Heart right ventricle (tissue), 16 donors: ENCODE measurements at regions of chrX and their contacts with region 1.

Region 1: DNA sequence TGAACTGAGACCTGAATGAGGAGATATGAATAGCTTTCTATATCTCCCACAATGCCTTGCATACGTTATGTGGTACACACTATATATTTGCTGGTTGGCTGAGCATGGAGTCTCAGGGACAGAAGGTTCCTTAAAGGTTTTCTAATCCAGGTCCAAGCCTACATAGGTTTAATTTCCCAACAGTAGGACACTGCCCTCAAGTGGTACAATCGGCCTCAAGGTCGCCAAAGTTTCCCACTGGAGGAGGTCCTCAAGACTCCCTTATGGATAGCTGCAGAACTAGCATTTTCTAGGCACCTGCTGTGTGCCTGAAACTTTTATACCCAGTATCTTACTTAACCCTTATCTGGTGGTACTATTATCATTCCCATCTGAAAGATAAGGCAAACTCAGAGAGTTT is 21.0 kb upstream of the EFNB1 start:
- DNase-seq: no peak
- ATAC-seq: peak; percentile 35 to 81 (median 64)
- H3K4me3 ChIP-seq: no peak overlapping the region
- H3K27ac ChIP-seq: no peak overlapping the region
- H3K4me1 ChIP-seq: peaks cover 0 to 3% (median 0%) of the 10 kb centered on the region in 9 donors
- H3K27me3 ChIP-seq: peaks cover 0 to 49% (median 0%) of the 10 kb centered on the region in 7 donors
- CTCF ChIP-seq: peak; percentile 27 to 64 (median 51)

Region 2: DNA sequence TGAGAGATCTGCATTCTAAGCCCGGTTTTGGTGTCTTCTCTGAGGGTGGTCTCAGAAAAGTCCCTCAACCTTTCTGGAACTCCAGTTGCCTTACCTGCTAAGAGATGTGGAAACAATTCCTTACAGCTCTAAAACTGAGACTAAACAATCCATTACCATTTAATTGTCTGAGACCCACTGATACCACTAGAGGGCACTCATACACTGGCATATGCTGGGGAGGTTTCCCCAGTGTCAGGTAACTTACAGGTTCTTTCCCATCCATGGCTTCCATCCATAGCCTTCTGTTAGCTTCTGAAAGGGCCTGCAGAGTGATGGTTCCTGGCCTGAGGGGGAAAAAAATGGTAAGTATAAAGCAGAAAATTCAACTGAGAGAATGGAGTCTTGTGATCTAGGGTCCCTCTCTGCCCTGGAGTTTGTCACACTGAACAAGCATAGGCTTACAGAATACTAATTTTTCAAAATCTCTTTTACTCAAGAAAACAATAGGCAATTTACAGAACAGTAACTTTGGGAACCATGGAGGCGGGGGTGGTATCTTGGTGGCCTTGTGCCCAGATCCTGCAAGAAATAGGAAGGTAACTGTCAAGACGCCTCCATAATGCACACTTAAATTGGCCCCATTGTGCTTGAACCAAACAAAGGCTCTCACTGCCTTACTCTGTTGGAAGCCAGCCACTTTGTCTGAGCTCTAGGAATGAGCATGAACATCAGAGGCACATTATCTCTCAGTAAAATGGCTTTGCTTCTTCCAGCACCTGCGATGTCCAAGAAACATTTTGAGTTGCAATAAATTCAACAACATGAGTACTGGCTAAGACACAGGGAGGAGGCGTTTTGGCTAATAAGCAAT is 610.7 kb before region 1 on chrX:
- intact Hi-C with region 1: loop called in 1 of 10 experiments (anchors 10 kb)
- DNase-seq: peak in 1 of 2 donors; percentile 19
- ATAC-seq: peak in 3 of 8 donors; percentile 44 to 60 (median 44)
- H3K4me3 ChIP-seq: no peak overlapping the region
- H3K27ac ChIP-seq: no peak overlapping the region
- H3K4me1 ChIP-seq: peaks cover 0 to 12% (median 0%) of the 10 kb centered on the region in 9 donors
- H3K27me3 ChIP-seq: peaks cover 0 to 10% (median 0%) of the 10 kb centered on the region in 7 donors
- CTCF ChIP-seq: peak; percentile 42 to 77 (median 64)

Region 3: GRCh38 chrX:68511255-68511654 is 296.6 kb before region 1 on chrX:
- intact Hi-C with region 1: loop called in 9 of 10 experiments (anchors 1 to 10 kb)
- DNase-seq: peak in 1 of 2 donors; percentile 26
- ATAC-seq: peak in 2 of 8 donors; percentile 50 to 58
- H3K4me3 ChIP-seq: no peak overlapping the region
- H3K27ac ChIP-seq: no peak overlapping the region
- H3K4me1 ChIP-seq: peaks cover 0 to 23% (median 5%) of the 10 kb centered on the region in 9 donors
- H3K27me3 ChIP-seq: no peaks in the 10 kb centered on the region
- CTCF ChIP-seq: peak; percentile 65 to 94 (median 72)

Region 4: GRCh38 chrX:68599251-68600152 is 208.3 kb before region 1 on chrX:
- intact Hi-C with region 1: loop called in 3 of 10 experiments (anchors 5 to 10 kb)
- DNase-seq: no peak
- ATAC-seq: no peak
- H3K4me3 ChIP-seq: no peak overlapping the region
- H3K27ac ChIP-seq: no peak overlapping the region
- H3K4me1 ChIP-seq: no peaks in the 10 kb centered on the region
- H3K27me3 ChIP-seq: no peaks in the 10 kb centered on the region
- CTCF ChIP-seq: peak; percentile 44 to 76 (median 64)

Region 5: GRCh38 chrX:68732906-68733493 is 74.8 kb before region 1 on chrX:
- intact Hi-C with region 1: loop called in 9 of 10 experiments (anchors 1 to 5 kb)
- DNase-seq: peak; percentile 46 to 73
- ATAC-seq: peak; percentile 49 to 87 (median 78)
- H3K4me3 ChIP-seq: no peak overlapping the region
- H3K27ac ChIP-seq: no peak overlapping the region
- H3K4me1 ChIP-seq: no peaks in the 10 kb centered on the region
- H3K27me3 ChIP-seq: peaks cover 0 to 40% (median 0%) of the 10 kb centered on the region in 7 donors
- CTCF ChIP-seq: peak; percentile 47 to 81 (median 69)